OCI-LY7 (cell line): ENCODE measurements at regions of chr4 and their contacts with region 1.

Region 1: GRCh38 chr4:118076958-118077766 is 42.9 kb downstream of the NDST3 start:
- DNase-seq: peak; percentile 41
- H3K4me3 ChIP-seq: no peak overlapping the region
- H3K27ac ChIP-seq: no peak overlapping the region
- H3K4me1 ChIP-seq: no peaks in the 10 kb centered on the region
- CTCF ChIP-seq: peak; percentile 77

Region 2: GRCh38 chr4:118224239-118224829 is 147.2 kb after region 1 on chr4:
- CTCF ChIA-PET with region 1: no interaction called
- POLR2A ChIA-PET with region 1: no interaction called
- intact Hi-C with region 1: loop called (anchors 2 kb)
- DNase-seq: peak; percentile 55
- H3K4me3 ChIP-seq: no peak overlapping the region
- H3K27ac ChIP-seq: no peak overlapping the region
- H3K4me1 ChIP-seq: no peaks in the 10 kb centered on the region
- CTCF ChIP-seq: peak; percentile 86

Region 3: GRCh38 chr4:118270492-118270891 is 193.3 kb after region 1 on chr4:
- CTCF ChIA-PET with region 1: no interaction called
- POLR2A ChIA-PET with region 1: interaction called, 3 read pairs
- intact Hi-C with region 1: loop called (anchors 5 kb)
- DNase-seq: peak; percentile 65
- H3K4me3 ChIP-seq: no peak overlapping the region
- H3K27ac ChIP-seq: no peak overlapping the region
- H3K4me1 ChIP-seq: no peaks in the 10 kb centered on the region
- CTCF ChIP-seq: peak; percentile 87